ENCODE measurements at regions of chr2 and their contacts with region 1.

Region 1: DNA sequence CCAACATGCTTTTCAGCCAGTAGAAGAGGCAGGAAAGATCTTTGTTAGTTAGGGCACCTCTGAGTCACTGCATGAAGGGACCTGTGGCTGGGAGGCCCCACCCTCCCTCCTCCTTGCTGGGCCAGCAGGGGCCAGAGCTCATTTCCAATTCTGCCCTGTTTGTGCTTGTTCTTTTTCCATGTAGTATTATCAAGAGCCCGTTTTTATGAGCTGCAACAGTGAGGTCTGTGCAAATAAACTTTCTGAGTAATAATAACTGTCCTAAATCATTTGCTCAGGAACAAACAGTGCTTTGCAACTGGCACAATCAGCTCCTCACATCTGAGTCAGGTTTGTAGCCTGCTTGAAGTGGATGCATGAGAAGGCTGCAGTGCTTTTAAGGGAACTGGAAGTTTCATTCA is 128.0 kb downstream of the ARL4C start:
- DNase-seq: no peak
- H3K4me3 ChIP-seq: no peak overlapping the region
- H3K27ac ChIP-seq: no peak overlapping the region
- H3K4me1 ChIP-seq: no peaks in the 10 kb centered on the region
- H3K27me3 ChIP-seq: no peaks in the 10 kb centered on the region
- CTCF ChIP-seq: no peak

Region 2: GRCh38 chr2:234512884-234513669 is 144.2 kb after region 1 on chr2:
- CTCF ChIA-PET with region 1: no interaction called
- POLR2A ChIA-PET with region 1: interaction called, 14 read pairs
- intact Hi-C with region 1: no loop called
- DNase-seq: no peak
- H3K4me3 ChIP-seq: no peak overlapping the region
- H3K27ac ChIP-seq: no peak overlapping the region
- H3K4me1 ChIP-seq: no peaks in the 10 kb centered on the region
- H3K27me3 ChIP-seq: peaks cover 10% of the 10 kb centered on the region
- CTCF ChIP-seq: no peak